ENCODE measurements at regions of chr6 and their contacts with region 1.

Region 1: GRCh38 chr6:166342349-166343149 is at the start of gene SFT2D1:
- DNase-seq: peak; percentile 91 to 96 (median 96)
- ATAC-seq: peak; percentile 98 to 99
- H3K4me3 ChIP-seq: peak within 1 kb of the TSS; percentile 84
- H3K27ac ChIP-seq: peak within 1 kb of the TSS; percentile 75
- H3K4me1 ChIP-seq: peaks cover 9% of the 10 kb centered on the region
- H3K27me3 ChIP-seq: no peaks in the 10 kb centered on the region
- total RNA-seq, gene SFT2D1: 23.6 to 25.2 (median 24.3) TPM

Region 2: DNA sequence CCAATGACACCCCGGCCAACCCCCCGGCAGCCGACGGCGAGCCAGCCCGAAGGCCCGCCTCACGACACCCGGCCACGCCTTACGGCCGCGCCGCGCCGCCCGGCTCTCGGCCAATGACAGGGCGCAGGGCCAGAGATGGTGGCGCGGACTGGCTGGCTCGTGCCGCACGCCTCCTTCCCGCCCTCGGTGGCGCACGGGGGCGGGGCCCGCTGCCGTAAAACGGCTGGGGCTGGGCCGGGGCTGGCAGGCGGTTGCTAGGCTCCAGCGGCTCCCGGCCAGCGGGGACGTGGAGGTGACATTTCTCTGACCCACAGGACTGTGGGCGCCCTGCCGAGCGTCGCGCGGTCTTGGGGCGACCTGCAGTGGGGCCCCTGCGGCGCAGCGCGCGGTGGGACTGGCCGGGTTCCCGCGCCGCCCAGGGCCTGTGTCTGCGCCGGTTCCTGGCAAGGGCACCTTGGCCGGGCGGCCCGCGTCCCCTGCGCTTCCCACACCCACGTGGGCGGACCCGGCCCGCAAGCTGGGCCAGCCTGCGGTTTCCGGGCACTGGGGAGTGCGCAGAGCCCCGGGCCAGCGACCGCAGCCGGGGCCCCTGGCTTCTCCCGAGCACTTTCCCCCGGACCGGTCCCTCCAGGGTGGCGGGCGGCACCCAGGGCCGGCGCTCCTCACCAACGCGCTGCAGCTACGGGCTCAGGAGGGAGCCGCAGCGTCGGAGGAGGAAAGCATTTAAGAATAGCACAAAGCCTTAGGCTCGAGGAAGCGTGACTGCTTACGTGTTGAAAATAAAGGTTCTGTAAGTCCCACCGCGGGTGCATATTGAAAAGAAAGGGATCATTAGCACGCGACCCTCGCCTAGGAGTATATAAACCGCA is 40.6 kb after region 1 on chr6 and contains the start of gene MPC1:
- intact Hi-C with region 1: loop called in 2 of 4 experiments (anchors 2 to 5 kb)
- DNase-seq: peak; percentile 97 to 99 (median 99)
- ATAC-seq: peak; percentile 98 to 99
- H3K4me3 ChIP-seq: peak within 1 kb of the TSS; percentile 79
- H3K27ac ChIP-seq: peak within 1 kb of the TSS; percentile 93
- H3K4me1 ChIP-seq: no peaks in the 10 kb centered on the region
- H3K27me3 ChIP-seq: no peaks in the 10 kb centered on the region
- total RNA-seq, gene MPC1: 275 to 395 (median 317) TPM

Region 3: DNA sequence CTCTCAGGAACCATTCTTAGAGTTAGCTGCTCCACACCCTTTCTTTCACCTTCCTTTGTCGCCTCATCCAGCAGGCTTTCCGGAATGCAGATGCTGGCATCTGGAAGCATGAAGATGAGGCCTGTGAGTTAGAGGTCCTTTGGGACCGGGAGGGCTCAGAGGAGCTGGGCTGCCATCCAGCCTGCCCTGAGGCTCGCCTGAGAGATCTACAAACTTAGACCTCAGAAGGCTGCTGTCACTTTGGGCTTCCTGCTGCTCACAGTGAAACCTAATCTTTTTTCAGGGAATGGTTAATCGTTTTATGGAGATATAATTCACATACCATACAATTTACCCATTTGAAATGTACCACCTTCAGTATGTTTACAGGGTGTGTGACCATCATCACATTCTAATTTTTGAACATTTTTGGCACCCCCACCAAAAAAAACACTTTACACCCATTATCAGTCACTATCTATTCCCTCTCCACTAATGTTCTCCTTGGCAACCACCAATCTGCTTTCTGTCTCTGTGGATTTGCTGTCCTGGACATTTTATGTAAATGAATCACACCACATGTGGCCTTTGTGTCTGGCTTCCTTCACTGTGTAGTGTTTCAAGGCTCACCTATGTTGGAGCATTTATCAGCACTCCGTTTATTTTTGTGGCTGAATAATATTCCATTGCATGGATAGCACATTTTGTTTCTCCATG is 60.2 kb after region 1 on chr6:
- intact Hi-C with region 1: no loop called
- DNase-seq: no peak
- ATAC-seq: no peak
- H3K4me3 ChIP-seq: no peak overlapping the region
- H3K27ac ChIP-seq: no peak overlapping the region
- H3K4me1 ChIP-seq: no peaks in the 10 kb centered on the region
- H3K27me3 ChIP-seq: no peaks in the 10 kb centered on the region

Measured in right cardiac atrium (tissue), 5 donors.